CD4-positive, alpha-beta memory T cell (primary cell): ENCODE measurements at regions of chr2 and their contacts with region 1.

Region 1: GRCh38 chr2:128736689-128737545 is 418.2 kb upstream of the HS6ST1 start:
- DNase-seq: peak in 3 of 5 donors; percentile 21 to 32 (median 23)
- H3K4me3 ChIP-seq: no peak overlapping the region
- H3K4me3 Mint-ChIP-seq: peak overlapping the region in 1 of 8 donors; percentile 46
- H3K27ac ChIP-seq: no peak overlapping the region
- H3K27ac Mint-ChIP-seq: no peak overlapping the region
- H3K4me1 ChIP-seq: peaks cover 6% of the 10 kb centered on the region
- H3K4me1 Mint-ChIP-seq: peaks cover 0 to 4% (median 2%) of the 10 kb centered on the region in 4 donors
- H3K27me3 ChIP-seq: no peaks in the 10 kb centered on the region
- H3K27me3 Mint-ChIP-seq: peaks cover 4 to 10% of the 10 kb centered on the region in 2 donors

Region 2: DNA sequence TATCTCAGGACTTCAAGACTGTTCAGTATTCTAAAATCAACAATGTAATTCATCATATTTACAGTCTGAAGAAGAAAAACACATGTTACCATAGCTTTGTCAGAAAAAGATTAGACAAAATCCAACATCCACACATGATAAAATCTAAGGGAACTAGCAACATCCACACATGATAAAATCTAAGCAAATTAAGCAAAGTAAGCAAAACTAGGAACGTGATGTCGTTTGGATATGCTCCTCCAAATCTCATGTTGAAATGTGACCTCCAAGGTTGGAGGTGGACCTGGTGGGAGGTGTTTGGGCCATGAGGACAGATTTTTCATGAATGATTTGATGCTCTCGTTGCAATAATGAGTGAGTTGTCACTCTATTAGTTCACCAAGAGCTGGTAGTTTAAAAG is 299.1 kb after region 1 on chr2:
- CTCF ChIA-PET with region 1: no interaction called
- POLR2A ChIA-PET with region 1: no interaction called
- intact Hi-C with region 1: no loop called
- DNase-seq: no peak
- H3K4me3 ChIP-seq: no peak overlapping the region
- H3K4me3 Mint-ChIP-seq: no peak overlapping the region
- H3K27ac ChIP-seq: no peak overlapping the region
- H3K27ac Mint-ChIP-seq: no peak overlapping the region
- H3K4me1 ChIP-seq: no peaks in the 10 kb centered on the region
- H3K4me1 Mint-ChIP-seq: no peaks in the 10 kb centered on the region
- H3K27me3 ChIP-seq: no peaks in the 10 kb centered on the region
- H3K27me3 Mint-ChIP-seq: no peaks in the 10 kb centered on the region

Region 3: DNA sequence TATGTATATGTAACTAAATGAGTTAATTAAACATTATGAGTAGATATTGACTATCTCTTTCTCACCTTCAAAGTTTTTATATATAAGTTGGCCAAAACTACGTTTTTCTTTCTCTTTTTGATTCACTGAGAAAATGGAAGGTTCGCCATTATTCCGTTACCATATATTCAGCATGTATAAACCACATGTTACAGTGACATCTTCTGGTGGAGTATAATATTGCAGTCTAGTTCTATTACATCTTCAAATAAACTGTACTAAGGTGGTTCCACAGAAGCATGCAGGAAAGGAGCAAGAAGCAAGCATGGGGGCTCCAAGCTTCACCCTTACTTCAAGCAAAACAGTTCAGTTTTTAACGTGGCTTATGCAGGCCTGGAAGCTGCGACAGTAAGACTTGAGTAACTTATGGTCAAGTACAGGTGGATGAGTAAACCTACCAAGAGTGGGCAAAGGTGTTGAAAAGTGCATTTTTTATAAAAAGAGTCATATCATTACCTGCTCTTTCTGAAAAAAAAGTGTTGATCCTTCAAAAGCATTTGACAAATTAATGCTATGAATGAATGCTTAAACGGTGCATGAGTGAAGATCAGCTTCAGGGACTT is 1112.7 kb after region 1 on chr2:
- CTCF ChIA-PET with region 1: no interaction called
- POLR2A ChIA-PET with region 1: no interaction called
- intact Hi-C with region 1: loop called (anchors 10 kb)
- DNase-seq: peak in 4 of 5 donors; percentile 54 to 64 (median 56)
- H3K4me3 ChIP-seq: no peak overlapping the region
- H3K4me3 Mint-ChIP-seq: peak overlapping the region in 1 of 8 donors; percentile 43
- H3K27ac ChIP-seq: no peak overlapping the region
- H3K27ac Mint-ChIP-seq: no peak overlapping the region
- H3K4me1 ChIP-seq: no peaks in the 10 kb centered on the region
- H3K4me1 Mint-ChIP-seq: peaks cover 0 to 3% (median 1%) of the 10 kb centered on the region in 4 donors
- H3K27me3 ChIP-seq: peaks cover 4% of the 10 kb centered on the region
- H3K27me3 Mint-ChIP-seq: peaks cover 6 to 18% of the 10 kb centered on the region in 2 donors